ENCODE measurements at regions of chr12 and their contacts with region 1.

Region 1: GRCh38 chr12:106357549-106358395 is at the start of gene POLR3B:
- DNase-seq: peak; percentile 74
- ATAC-seq: peak; percentile 92
- H3K4me3 ChIP-seq: peak within 1 kb of the TSS; percentile 89
- H3K27ac ChIP-seq: peak within 1 kb of the TSS; percentile 79
- H3K4me1 ChIP-seq: no peaks in the 10 kb centered on the region
- H3K27me3 ChIP-seq: no peaks in the 10 kb centered on the region
- CTCF ChIP-seq: peak; percentile 85 to 95 (median 95); a peak in 5 of 6 replicates
- EP300 ChIP-seq: peak in 1 of 2 experiments; percentile 27; a peak in 1 of 4 replicates
- POLR2A ChIP-seq: peak; percentile 85
- RAD21 ChIP-seq: peak; percentile 68
- polyA plus RNA-seq, gene POLR3B: 2.3 to 4.3 TPM

Region 2: DNA sequence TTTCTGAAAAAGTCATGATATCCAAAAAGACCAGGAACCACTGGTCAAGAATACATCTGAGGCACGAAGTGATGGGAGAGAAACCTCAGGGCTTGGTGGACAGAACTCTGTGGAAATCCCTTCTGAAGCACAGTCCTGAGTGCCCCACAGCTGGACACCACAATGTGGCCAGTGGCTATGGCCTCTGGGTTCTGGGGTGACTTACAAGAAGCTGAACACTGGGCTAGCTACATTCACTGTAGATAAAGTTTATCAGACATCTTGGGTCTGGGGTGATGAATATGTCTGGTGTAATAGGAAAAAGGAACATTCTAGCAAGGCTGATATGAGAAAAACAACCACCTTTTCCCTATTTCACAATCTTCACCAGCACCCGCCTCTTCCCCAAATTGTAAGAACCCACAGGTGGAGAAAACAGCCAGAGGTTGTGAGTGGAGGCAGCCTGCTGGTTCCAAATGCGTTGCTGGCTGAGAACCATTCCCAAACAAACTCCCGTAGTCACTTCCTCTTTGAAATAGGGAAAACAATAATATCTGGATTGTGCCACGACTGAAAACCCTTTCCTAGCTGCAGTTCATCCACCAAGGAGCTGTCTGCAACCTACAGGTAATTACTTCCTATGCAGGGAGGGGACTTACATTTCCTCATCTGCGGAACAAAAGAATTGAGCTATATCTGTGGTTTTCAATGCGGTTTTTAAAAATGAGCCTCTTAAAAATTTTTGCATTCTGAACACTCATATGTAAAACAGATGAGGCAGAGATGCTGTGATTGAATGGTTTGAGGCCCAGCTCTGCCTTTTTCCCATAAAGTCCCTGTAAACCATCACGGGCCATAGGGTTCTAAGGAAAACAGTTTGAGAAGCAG is 1593.3 kb before region 1 on chr12:
- CTCF ChIA-PET with region 1: no interaction called
- POLR2A ChIA-PET with region 1: interaction called, 11 read pairs
- RAD21 ChIA-PET with region 1: no interaction called
- SMC1A ChIA-PET with region 1: no interaction called
- in situ Hi-C with region 1: no loop called
- intact Hi-C with region 1: no loop called
- DNase-seq: peak; percentile 36
- ATAC-seq: peak; percentile 60
- H3K4me3 ChIP-seq: no peak overlapping the region
- H3K27ac ChIP-seq: no peak overlapping the region
- H3K4me1 ChIP-seq: peaks cover 13% of the 10 kb centered on the region
- H3K27me3 ChIP-seq: no peaks in the 10 kb centered on the region
- CTCF ChIP-seq: no peak
- EP300 ChIP-seq: no peak
- POLR2A ChIP-seq: no peak
- RAD21 ChIP-seq: no peak

Region 3: GRCh38 chr12:106302401-106303201 is 55.2 kb before region 1 on chr12 and contains the start of gene TCP11L2:
- CTCF ChIA-PET with region 1: interaction called, 11 read pairs
- POLR2A ChIA-PET with region 1: no interaction called
- RAD21 ChIA-PET with region 1: no interaction called
- SMC1A ChIA-PET with region 1: interaction called, 7 read pairs
- in situ Hi-C with region 1: no loop called
- intact Hi-C with region 1: no loop called
- DNase-seq: no peak
- ATAC-seq: peak; percentile 87
- H3K4me3 ChIP-seq: peak within 1 kb of the TSS; percentile 84
- H3K27ac ChIP-seq: peak within 1 kb of the TSS; percentile 89
- H3K4me1 ChIP-seq: peaks cover 7% of the 10 kb centered on the region
- H3K27me3 ChIP-seq: no peaks in the 10 kb centered on the region
- CTCF ChIP-seq: no peak
- EP300 ChIP-seq: no peak
- POLR2A ChIP-seq: peak; percentile 59
- RAD21 ChIP-seq: no peak
- polyA plus RNA-seq, gene TCP11L2: 0.18 to 0.29 TPM

Region 4: DNA sequence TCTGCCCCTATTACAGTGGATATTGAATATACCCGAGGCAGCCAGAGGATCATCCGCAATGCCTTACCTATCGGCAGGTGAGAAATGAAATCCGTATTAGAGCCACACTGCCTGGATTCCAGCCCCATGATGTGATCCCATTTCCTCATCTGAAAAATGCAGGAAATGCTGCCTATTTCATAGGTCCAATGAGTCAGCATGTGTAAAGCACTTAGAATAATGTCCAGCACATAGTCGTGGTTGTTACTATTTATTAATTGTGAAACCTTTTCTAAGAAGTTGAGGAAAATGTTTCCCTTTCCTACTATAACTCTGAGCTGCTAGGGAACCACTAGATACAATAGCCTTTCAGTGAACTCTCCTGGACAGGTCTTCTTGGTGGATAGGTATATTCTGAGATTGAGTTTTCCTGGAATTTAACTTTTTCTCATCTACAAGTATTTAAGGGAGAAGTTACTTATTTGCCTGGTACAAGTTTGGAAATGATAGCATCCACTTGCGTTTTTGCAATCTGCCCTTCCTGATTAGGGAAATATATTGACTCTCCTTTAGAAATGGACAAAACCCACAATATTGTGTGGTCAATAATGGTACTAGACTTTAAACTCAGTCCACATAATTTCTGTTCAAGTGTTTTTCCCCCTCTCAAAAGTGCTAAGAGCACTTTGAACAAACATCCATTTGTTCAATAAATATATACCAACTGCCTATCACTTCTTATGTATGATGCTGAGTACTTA is 12.0 kb after region 1 on chr12:
- CTCF ChIA-PET with region 1: interaction called, 14 read pairs
- POLR2A ChIA-PET with region 1: no interaction called
- RAD21 ChIA-PET with region 1: interaction called, 3 read pairs
- SMC1A ChIA-PET with region 1: interaction called, 4 read pairs
- in situ Hi-C with region 1: no loop called
- intact Hi-C with region 1: no loop called
- DNase-seq: no peak
- ATAC-seq: no peak
- H3K4me3 ChIP-seq: no peak overlapping the region
- H3K27ac ChIP-seq: no peak overlapping the region
- H3K4me1 ChIP-seq: no peaks in the 10 kb centered on the region
- H3K27me3 ChIP-seq: no peaks in the 10 kb centered on the region
- CTCF ChIP-seq: no peak
- EP300 ChIP-seq: no peak
- POLR2A ChIP-seq: no peak
- RAD21 ChIP-seq: no peak

Region 5: DNA sequence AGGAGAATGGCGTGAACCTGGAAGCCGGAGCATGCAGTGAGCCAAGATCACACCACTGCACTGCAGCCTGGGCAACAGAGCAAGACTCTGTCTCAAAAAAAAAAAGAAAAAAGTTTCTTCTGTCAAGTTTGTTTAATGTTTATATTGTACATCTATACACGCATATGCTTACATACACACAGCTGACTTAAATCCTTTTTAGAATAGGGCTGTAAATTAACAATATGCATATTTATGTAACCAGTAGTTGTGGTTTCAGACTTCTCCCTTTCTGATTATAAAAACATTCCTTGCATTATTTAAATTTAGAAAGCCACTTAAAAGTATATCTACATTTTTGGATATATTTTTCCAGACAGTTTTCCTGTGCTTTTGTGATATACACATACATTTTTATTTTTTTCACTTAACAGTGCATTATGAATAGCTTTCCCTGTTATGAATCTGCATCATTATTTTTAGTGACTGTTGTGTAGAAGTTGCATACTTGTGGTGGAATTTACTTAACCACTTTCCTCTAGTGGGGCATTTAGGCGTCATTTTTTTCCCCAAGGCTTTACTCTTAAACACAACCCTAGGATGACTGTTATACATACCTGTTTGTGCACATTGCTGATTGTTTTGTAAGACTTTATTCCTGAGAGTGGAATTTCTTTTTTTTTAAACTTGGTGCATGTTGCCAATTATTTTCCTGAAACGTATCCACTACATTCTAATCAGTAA is 29.2 kb after region 1 on chr12:
- CTCF ChIA-PET with region 1: interaction called, 13 read pairs
- POLR2A ChIA-PET with region 1: interaction called, 3 read pairs
- RAD21 ChIA-PET with region 1: interaction called, 4 read pairs
- SMC1A ChIA-PET with region 1: interaction called, 5 read pairs
- in situ Hi-C with region 1: no loop called
- intact Hi-C with region 1: no loop called
- DNase-seq: no peak
- ATAC-seq: no peak
- H3K4me3 ChIP-seq: no peak overlapping the region
- H3K27ac ChIP-seq: no peak overlapping the region
- H3K4me1 ChIP-seq: no peaks in the 10 kb centered on the region
- H3K27me3 ChIP-seq: no peaks in the 10 kb centered on the region
- CTCF ChIP-seq: no peak
- EP300 ChIP-seq: no peak
- POLR2A ChIP-seq: no peak
- RAD21 ChIP-seq: no peak